ENCODE measurements at regions of chr1 and their contacts with region 1.

Region 1: GRCh38 chr1:218467101-218468072 is 122.3 kb downstream of the TGFB2 start:
- DNase-seq: no peak
- H3K4me3 Mint-ChIP-seq: no peak overlapping the region
- H3K27ac Mint-ChIP-seq: no peak overlapping the region
- H3K4me1 Mint-ChIP-seq: no peaks in the 10 kb centered on the region
- H3K27me3 Mint-ChIP-seq: peaks cover 3% of the 10 kb centered on the region

Region 2: DNA sequence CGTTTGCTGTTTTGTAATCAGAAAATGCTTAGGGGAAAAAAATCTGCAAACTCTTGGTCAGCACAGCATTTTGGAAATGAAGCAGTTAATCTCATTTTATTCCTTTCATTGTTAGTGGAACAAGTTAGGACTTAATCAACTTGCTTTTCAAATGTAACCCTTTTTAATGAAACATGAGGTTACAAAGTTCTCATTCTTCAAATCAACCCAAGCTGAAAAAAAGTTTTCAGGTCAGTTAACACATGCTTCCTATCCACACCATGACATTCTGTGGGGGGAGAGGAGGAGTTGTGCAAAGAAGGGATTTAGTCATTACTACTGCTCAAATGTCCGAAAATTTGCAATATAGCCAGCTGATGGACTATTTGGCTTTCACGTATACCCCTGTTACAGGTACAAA is 423.1 kb after region 1 on chr1:
- intact Hi-C with region 1: loop called (anchors 5 kb)
- DNase-seq: no peak
- H3K4me3 Mint-ChIP-seq: no peak overlapping the region
- H3K27ac Mint-ChIP-seq: no peak overlapping the region
- H3K4me1 Mint-ChIP-seq: no peaks in the 10 kb centered on the region
- H3K27me3 Mint-ChIP-seq: no peaks in the 10 kb centered on the region